Esophagus muscularis mucosa (tissue), 4 donors: ENCODE measurements at regions of chr20 and their contacts with region 1.

Region 1: GRCh38 chr20:50169329-50169831 is 15.9 kb upstream of the PEDS1 start:
- DNase-seq: peak; percentile 98
- H3K4me3 ChIP-seq: no peak overlapping the region
- H3K27ac ChIP-seq: no peak overlapping the region
- H3K4me1 ChIP-seq: peaks cover 37 to 57% (median 50%) of the 10 kb centered on the region in 4 donors
- H3K27me3 ChIP-seq: no peaks in the 10 kb centered on the region
- CTCF ChIP-seq: peak; percentile 96 to 100 (median 99)
- EP300 ChIP-seq: no peak
- POLR2A ChIP-seq: no peak

Region 2: GRCh38 chr20:49982346-49983122 is 186.8 kb before region 1 on chr20 and contains the start of gene SNAI1:
- intact Hi-C with region 1: loop called (anchors 5 kb)
- DNase-seq: peak; percentile 94
- H3K4me3 ChIP-seq: peak within 1 kb of the TSS; percentile 53 to 65 (median 56)
- H3K27ac ChIP-seq: peak within 1 kb of the TSS; percentile 53 to 75 (median 69)
- H3K4me1 ChIP-seq: peaks cover 25 to 68% (median 64%) of the 10 kb centered on the region in 4 donors
- H3K27me3 ChIP-seq: no peaks in the 10 kb centered on the region
- CTCF ChIP-seq: peak; percentile 44 to 56 (median 52)
- EP300 ChIP-seq: no peak
- POLR2A ChIP-seq: peak; percentile 64
- total RNA-seq, gene SNAI1: 0.83 to 5.3 (median 3.0) TPM

Region 3: GRCh38 chr20:50058747-50059404 is 110.5 kb before region 1 on chr20:
- intact Hi-C with region 1: no loop called
- DNase-seq: no peak
- H3K4me3 ChIP-seq: no peak overlapping the region
- H3K27ac ChIP-seq: no peak overlapping the region
- H3K4me1 ChIP-seq: peaks cover 11 to 14% (median 12%) of the 10 kb centered on the region in 4 donors
- H3K27me3 ChIP-seq: no peaks in the 10 kb centered on the region
- CTCF ChIP-seq: no peak
- EP300 ChIP-seq: no peak
- POLR2A ChIP-seq: no peak

Region 4: DNA sequence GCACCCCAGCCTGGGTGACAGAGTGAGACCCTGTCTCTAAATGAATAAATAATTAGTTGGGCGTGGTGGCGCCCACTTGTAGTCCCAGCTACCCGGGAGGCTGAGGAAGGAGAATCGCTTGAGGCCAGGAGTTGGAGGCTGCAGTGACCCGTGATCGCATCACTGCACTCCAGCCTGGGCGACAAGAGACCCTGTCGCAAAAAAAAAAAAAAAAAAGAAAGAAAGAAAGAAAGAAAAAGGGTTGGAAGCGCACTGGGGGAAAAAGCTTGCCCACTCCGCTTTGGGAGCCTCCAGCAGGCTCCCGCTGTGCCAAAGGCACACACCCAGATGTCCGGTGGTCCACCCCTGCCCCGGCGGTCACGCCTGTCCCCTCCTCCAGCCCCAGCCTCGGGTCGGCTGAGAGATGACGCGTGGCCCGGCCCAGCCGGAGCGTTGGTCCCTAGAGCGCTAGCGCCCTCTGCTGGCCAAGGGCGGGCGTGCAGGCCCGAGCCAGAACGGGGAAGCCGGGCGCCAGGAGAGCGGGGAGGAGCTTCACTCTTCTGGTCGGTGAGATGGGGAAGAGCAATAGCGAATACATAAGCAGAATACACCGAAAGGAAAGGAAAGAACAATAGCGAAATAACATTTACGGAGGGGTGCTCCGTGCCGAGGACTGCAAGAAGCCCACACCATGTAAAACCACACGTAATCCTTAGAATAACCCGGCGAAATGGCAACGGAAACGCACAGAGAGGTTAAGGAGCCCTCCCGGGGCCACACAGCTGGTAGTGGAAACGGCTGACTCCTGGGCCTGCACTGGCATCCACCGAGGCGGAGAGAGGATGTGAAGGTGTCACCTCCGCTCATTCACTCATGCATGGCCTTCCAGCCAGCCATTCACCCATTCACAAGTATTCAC is 98.1 kb before region 1 on chr20:
- intact Hi-C with region 1: loop called (anchors 5 kb)
- DNase-seq: peak; percentile 98
- H3K4me3 ChIP-seq: peak overlapping the region; percentile 39 to 54 (median 45)
- H3K27ac ChIP-seq: no peak overlapping the region
- H3K4me1 ChIP-seq: peaks cover 15 to 29% (median 27%) of the 10 kb centered on the region in 4 donors
- H3K27me3 ChIP-seq: no peaks in the 10 kb centered on the region
- CTCF ChIP-seq: peak in 2 of 3 experiments; percentile 100
- EP300 ChIP-seq: no peak
- POLR2A ChIP-seq: no peak

Region 5: GRCh38 chr20:50120897-50121693 is 48.3 kb before region 1 on chr20:
- intact Hi-C with region 1: loop called (anchors 2 kb)
- DNase-seq: no peak
- H3K4me3 ChIP-seq: no peak overlapping the region
- H3K27ac ChIP-seq: peak overlapping the region; percentile 9 to 50 (median 15)
- H3K4me1 ChIP-seq: peaks cover 11 to 17% (median 16%) of the 10 kb centered on the region in 4 donors
- H3K27me3 ChIP-seq: no peaks in the 10 kb centered on the region
- CTCF ChIP-seq: peak; percentile 81 to 97 (median 96)
- EP300 ChIP-seq: no peak
- POLR2A ChIP-seq: no peak